ENCODE measurements at regions of chr3 and their contacts with region 1.

Region 1: GRCh38 chr3:123719862-123720453 is 135.1 kb upstream of the HACD2 start:
- ATAC-seq: peak in 1 of 8 experiments; percentile 2
- H3K4me3 ChIP-seq: no peak overlapping the region
- H3K27ac ChIP-seq: no peak overlapping the region
- H3K4me1 ChIP-seq: peaks cover 0 to 8% of the 10 kb centered on the region in 2 donors

Region 2: DNA sequence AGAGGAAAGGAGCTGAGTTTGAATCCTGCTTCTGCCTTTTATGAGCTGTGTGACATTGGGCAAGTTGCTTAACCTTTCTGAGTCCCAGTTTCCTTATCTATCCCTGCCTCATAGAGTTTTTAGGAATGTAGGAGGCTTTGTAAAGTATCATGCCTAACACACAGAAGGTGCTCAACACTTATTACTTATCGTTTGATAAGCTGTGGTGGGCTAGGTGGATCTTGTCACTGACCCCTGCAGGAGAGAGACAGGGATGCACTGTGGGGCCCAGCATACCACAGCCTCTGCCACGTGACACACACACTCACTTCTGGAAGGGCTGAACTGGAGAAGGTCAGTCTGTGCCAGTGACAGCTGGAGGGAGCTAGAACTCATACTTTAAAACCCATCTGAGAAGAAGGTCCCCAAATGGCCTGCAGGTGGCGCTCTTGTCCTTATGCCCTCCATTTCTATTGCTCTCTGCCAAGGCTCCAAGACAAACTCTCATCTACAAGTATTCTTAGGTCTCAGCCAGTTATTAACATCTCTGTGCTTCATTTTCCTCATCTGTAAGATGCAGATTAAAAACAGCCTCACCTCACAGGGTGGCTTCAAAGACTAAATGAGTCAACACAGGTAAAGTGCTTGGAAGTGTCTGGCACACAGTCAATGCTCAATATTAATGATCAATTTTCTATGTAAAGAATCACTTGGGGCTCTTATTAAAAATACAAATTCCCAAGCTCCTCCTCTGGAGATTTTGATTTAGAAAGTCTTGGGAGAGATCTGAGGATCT is 77.6 kb before region 1 on chr3:
- in situ Hi-C with region 1: loop called in 1 of 9 experiments (anchors 10 kb)
- ATAC-seq: peak in 7 of 8 experiments; percentile 36 to 99 (median 78)
- H3K4me3 ChIP-seq: no peak overlapping the region
- H3K27ac ChIP-seq: no peak overlapping the region
- H3K4me1 ChIP-seq: no peaks in the 10 kb centered on the region

Region 3: DNA sequence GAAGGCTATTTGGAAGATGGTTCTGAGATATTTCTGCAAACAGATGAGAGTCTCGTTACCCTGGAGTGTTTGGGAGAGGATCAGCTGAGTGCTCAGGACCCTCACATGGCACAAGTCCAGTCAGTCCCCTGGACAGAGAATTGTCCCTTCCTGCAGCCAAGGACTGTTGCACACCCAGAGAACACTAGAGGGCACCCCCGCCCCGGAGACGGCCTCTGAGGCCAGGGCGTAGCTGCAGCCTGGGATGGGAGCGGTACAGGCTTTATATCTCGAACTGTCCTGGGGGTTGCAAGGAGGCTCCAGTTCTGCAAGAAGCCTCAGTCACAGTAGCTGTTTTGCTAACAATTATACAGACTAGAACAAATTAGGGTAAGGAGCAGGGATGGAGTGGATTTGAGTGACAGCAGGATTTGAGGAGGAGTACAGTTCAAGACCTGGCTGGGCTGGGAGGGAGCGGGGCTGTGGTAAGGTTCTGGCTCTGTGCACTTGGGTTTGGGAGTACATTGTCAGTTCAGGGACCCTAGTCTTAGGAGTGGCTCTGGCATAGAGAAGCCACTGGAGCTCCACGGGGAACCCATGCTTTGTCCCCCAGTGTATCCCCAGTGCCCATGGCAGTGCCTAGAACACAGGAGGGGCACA is 67.5 kb before region 1 on chr3:
- in situ Hi-C with region 1: loop called in 4 of 9 experiments (anchors 10 kb)
- ATAC-seq: peak; percentile 85 to 93 (median 90)
- H3K4me3 ChIP-seq: no peak overlapping the region
- H3K27ac ChIP-seq: peak overlapping the region in 1 of 2 donors; percentile 72
- H3K4me1 ChIP-seq: peaks cover 21 to 24% of the 10 kb centered on the region in 2 donors

Region 4: GRCh38 chr3:124174476-124174875 is 454.5 kb after region 1 on chr3:
- in situ Hi-C with region 1: no loop called
- ATAC-seq: peak in 4 of 8 experiments; percentile 22 to 91 (median 75)
- H3K4me3 ChIP-seq: no peak overlapping the region
- H3K27ac ChIP-seq: no peak overlapping the region
- H3K4me1 ChIP-seq: peaks cover 12 to 16% of the 10 kb centered on the region in 2 donors

Measured in motor neuron (in vitro differentiated cells).